ENCODE measurements at regions of chr7 and their contacts with region 1.

Region 1: DNA sequence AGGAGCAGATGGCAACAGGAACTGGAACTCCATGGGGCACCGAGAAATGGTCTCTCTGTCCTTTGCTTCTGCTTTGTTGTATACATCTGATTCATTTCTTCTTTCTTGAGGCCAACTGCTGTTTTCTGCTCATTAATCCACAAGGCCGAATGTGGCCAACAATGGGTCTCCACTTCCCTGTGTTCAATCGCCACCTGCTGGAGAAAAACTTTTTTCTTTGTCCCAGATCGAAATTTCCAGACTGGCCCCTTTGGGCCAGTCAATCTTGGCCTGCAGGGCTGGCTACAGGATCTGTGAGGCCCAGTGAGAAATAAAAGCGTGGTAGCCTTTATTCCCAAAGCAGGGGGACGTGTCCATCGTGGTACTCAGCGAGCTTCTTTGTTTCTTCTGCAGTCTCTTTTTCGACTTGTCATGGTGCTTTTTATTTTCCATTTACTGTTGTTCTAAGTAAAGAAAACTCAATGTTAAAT is 58.8 kb downstream of the PARP12 start:
- DNase-seq: peak in 5 of 14 experiments; percentile 7 to 58 (median 46)
- ATAC-seq: no peak
- H3K4me3 ChIP-seq: no peak overlapping the region
- H3K4me3 Mint-ChIP-seq: no peak overlapping the region
- H3K27ac ChIP-seq: no peak overlapping the region
- H3K27ac Mint-ChIP-seq: no peak overlapping the region
- H3K4me1 ChIP-seq: no peaks in the 10 kb centered on the region
- H3K4me1 Mint-ChIP-seq: no peaks in the 10 kb centered on the region
- H3K27me3 ChIP-seq: no peaks in the 10 kb centered on the region
- H3K27me3 Mint-ChIP-seq: no peaks in the 10 kb centered on the region
- CTCF ChIP-seq: peak; percentile 64

Region 2: DNA sequence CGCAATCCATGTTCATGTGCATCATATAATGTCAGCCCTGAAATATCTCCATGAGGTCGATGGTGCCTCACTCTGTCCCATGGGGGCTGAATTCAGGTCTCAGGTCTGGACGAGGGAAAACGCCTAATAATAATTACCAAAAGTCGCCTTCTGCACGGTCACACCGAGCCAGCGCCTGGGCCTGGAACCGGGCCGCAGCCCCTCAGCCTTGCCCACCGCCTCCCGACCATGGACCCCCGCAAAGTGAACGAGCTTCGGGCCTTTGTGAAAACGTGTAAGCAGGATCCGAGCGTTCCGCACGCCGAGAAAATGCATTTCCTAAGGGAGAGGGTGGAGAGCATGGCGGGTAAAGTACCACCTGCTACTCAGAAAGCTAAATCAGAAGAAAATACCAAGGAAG is 501.7 kb before region 1 on chr7:
- CTCF ChIA-PET with region 1: interaction called, 3 read pairs
- POLR2A ChIA-PET with region 1: no interaction called
- intact Hi-C with region 1: loop called (anchors 2 kb)
- DNase-seq: no peak
- ATAC-seq: no peak
- H3K4me3 ChIP-seq: no peak overlapping the region
- H3K4me3 Mint-ChIP-seq: no peak overlapping the region
- H3K27ac ChIP-seq: no peak overlapping the region
- H3K27ac Mint-ChIP-seq: no peak overlapping the region
- H3K4me1 ChIP-seq: peaks cover 9% of the 10 kb centered on the region
- H3K4me1 Mint-ChIP-seq: peaks cover 6% of the 10 kb centered on the region
- H3K27me3 ChIP-seq: no peaks in the 10 kb centered on the region
- H3K27me3 Mint-ChIP-seq: peaks cover 4% of the 10 kb centered on the region
- CTCF ChIP-seq: no peak

Region 3: DNA sequence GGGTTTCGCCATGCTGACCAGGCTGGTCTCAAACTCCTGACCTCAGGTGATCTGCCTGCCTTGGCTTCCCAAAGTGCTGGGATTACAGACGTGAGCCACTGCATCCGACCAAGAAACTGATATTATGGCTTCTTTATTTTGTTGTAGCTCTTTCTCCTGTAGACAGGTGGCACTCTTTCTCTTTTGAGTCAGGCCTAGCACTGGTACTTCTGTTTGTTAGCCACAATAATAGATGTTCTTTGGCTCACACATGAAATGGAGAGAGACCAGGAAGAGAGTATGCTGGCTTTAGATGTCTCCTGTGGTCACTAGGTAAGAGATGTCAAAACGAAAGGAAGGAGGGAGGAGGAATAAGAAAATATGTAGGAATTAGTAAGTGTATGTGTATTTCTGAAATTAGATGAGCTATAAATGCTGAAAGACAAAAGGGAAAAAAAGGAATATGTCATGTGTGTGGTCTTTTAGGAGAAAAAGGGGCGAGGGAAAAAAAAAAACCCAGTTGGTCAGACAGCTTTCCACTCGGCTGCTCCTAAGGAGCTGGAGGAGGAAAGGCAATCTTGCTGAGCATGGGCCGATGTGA is 401.7 kb before region 1 on chr7:
- CTCF ChIA-PET with region 1: interaction called, 11 read pairs
- POLR2A ChIA-PET with region 1: no interaction called
- intact Hi-C with region 1: loop called (anchors 1 to 2 kb)
- DNase-seq: peak in 3 of 14 experiments; percentile 40 to 53 (median 51)
- ATAC-seq: peak; percentile 78
- H3K4me3 ChIP-seq: no peak overlapping the region
- H3K4me3 Mint-ChIP-seq: no peak overlapping the region
- H3K27ac ChIP-seq: no peak overlapping the region
- H3K27ac Mint-ChIP-seq: no peak overlapping the region
- H3K4me1 ChIP-seq: no peaks in the 10 kb centered on the region
- H3K4me1 Mint-ChIP-seq: no peaks in the 10 kb centered on the region
- H3K27me3 ChIP-seq: no peaks in the 10 kb centered on the region
- H3K27me3 Mint-ChIP-seq: no peaks in the 10 kb centered on the region
- CTCF ChIP-seq: peak; percentile 70

Region 4: DNA sequence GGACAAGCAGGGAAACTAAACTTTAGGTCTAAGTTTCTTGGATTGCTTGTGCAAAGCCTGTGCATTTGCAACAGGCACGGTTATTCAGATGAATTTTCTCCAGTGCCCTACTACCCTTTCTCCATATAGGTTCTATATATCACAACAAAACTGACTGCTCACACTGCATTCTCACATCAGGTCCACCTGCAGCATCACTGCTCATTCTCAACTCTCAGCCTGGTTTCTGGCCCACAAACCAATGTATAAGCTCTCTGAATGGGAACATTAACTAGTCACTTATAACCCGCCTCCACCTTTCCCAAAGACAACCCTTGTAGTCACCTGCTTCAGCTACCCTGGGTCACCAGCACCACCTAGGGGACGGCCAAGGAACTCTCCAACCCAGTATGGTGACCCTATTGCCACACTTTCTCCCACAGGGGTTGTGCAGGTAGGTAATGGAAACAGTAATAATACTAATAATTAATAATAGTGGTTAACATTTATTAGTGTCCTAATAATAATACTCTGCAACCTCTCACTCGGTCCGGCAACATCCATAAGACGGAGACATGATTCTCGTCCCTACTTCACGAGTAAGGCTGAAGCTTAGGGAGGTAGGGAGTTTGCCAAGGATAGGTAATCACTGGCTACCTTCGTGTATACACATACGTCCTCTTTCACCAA is 383.1 kb before region 1 on chr7:
- CTCF ChIA-PET with region 1: interaction called, 6 read pairs
- POLR2A ChIA-PET with region 1: interaction called, 4 read pairs
- intact Hi-C with region 1: loop called (anchors 1 to 2 kb)
- DNase-seq: peak; percentile 28 to 64 (median 49)
- ATAC-seq: peak; percentile 91
- H3K4me3 ChIP-seq: no peak overlapping the region
- H3K4me3 Mint-ChIP-seq: no peak overlapping the region
- H3K27ac ChIP-seq: no peak overlapping the region
- H3K27ac Mint-ChIP-seq: peak overlapping the region; percentile 4
- H3K4me1 ChIP-seq: peaks cover 14% of the 10 kb centered on the region
- H3K4me1 Mint-ChIP-seq: peaks cover 26% of the 10 kb centered on the region
- H3K27me3 ChIP-seq: no peaks in the 10 kb centered on the region
- H3K27me3 Mint-ChIP-seq: no peaks in the 10 kb centered on the region
- CTCF ChIP-seq: peak; percentile 77

Region 5: GRCh38 chr7:139718859-139719258 is 285.1 kb before region 1 on chr7:
- CTCF ChIA-PET with region 1: no interaction called
- POLR2A ChIA-PET with region 1: no interaction called
- intact Hi-C with region 1: loop called (anchors 5 kb)
- DNase-seq: peak in 2 of 14 experiments; percentile 41 to 48
- ATAC-seq: no peak
- H3K4me3 ChIP-seq: no peak overlapping the region
- H3K4me3 Mint-ChIP-seq: no peak overlapping the region
- H3K27ac ChIP-seq: no peak overlapping the region
- H3K27ac Mint-ChIP-seq: no peak overlapping the region
- H3K4me1 ChIP-seq: peaks cover 6% of the 10 kb centered on the region
- H3K4me1 Mint-ChIP-seq: peaks cover 4% of the 10 kb centered on the region
- H3K27me3 ChIP-seq: no peaks in the 10 kb centered on the region
- H3K27me3 Mint-ChIP-seq: no peaks in the 10 kb centered on the region
- CTCF ChIP-seq: no peak

Region 6: GRCh38 chr7:139725077-139725476 is 278.9 kb before region 1 on chr7:
- CTCF ChIA-PET with region 1: no interaction called
- POLR2A ChIA-PET with region 1: no interaction called
- intact Hi-C with region 1: loop called in 1 of 2 experiments (anchors 5 kb)
- DNase-seq: no peak
- ATAC-seq: no peak
- H3K4me3 ChIP-seq: no peak overlapping the region
- H3K4me3 Mint-ChIP-seq: no peak overlapping the region
- H3K27ac ChIP-seq: no peak overlapping the region
- H3K27ac Mint-ChIP-seq: no peak overlapping the region
- H3K4me1 ChIP-seq: peaks cover 32% of the 10 kb centered on the region
- H3K4me1 Mint-ChIP-seq: peaks cover 50% of the 10 kb centered on the region
- H3K27me3 ChIP-seq: no peaks in the 10 kb centered on the region
- H3K27me3 Mint-ChIP-seq: no peaks in the 10 kb centered on the region
- CTCF ChIP-seq: no peak

Region 7: GRCh38 chr7:140049339-140050024 is 45.5 kb after region 1 on chr7:
- CTCF ChIA-PET with region 1: no interaction called
- POLR2A ChIA-PET with region 1: no interaction called
- intact Hi-C with region 1: no loop called
- DNase-seq: no peak
- ATAC-seq: no peak
- H3K4me3 ChIP-seq: no peak overlapping the region
- H3K4me3 Mint-ChIP-seq: no peak overlapping the region
- H3K27ac ChIP-seq: no peak overlapping the region
- H3K27ac Mint-ChIP-seq: peak overlapping the region; percentile 65
- H3K4me1 ChIP-seq: peaks cover 7% of the 10 kb centered on the region
- H3K4me1 Mint-ChIP-seq: peaks cover 24% of the 10 kb centered on the region
- H3K27me3 ChIP-seq: no peaks in the 10 kb centered on the region
- H3K27me3 Mint-ChIP-seq: no peaks in the 10 kb centered on the region
- CTCF ChIP-seq: no peak

Region 8: DNA sequence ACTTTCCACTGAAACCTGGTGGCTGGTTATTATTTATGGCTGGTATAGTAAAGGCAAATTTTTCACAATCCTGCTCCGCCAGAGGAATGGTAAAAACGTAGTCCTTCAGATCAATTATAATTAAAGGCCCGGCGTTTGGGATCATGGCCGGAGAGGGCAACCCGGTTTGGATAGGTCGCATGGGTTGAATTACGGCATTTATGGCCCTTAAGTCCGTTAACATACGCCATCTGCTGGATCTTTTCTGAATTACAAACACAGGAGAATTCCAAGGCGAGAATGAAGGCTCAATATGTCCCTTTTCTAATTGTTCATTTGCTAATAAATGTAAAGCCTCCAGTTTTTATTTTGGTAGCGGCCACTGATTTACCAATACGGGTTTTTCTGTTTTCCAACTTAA is 1748.7 kb after region 1 on chr7:
- CTCF ChIA-PET with region 1: no interaction called
- POLR2A ChIA-PET with region 1: no interaction called
- intact Hi-C with region 1: no loop called
- DNase-seq: peak in 2 of 14 experiments; percentile 13 to 18
- ATAC-seq: no peak
- H3K4me3 ChIP-seq: no peak overlapping the region
- H3K4me3 Mint-ChIP-seq: no peak overlapping the region
- H3K27ac ChIP-seq: no peak overlapping the region
- H3K27ac Mint-ChIP-seq: no peak overlapping the region
- H3K4me1 ChIP-seq: no peaks in the 10 kb centered on the region
- H3K4me1 Mint-ChIP-seq: no peaks in the 10 kb centered on the region
- H3K27me3 ChIP-seq: no peaks in the 10 kb centered on the region
- H3K27me3 Mint-ChIP-seq: no peaks in the 10 kb centered on the region
- CTCF ChIP-seq: no peak